CD8-positive, alpha-beta T cell (primary cell): ENCODE measurements at regions of chr16 and their contacts with region 1.

Region 1: DNA sequence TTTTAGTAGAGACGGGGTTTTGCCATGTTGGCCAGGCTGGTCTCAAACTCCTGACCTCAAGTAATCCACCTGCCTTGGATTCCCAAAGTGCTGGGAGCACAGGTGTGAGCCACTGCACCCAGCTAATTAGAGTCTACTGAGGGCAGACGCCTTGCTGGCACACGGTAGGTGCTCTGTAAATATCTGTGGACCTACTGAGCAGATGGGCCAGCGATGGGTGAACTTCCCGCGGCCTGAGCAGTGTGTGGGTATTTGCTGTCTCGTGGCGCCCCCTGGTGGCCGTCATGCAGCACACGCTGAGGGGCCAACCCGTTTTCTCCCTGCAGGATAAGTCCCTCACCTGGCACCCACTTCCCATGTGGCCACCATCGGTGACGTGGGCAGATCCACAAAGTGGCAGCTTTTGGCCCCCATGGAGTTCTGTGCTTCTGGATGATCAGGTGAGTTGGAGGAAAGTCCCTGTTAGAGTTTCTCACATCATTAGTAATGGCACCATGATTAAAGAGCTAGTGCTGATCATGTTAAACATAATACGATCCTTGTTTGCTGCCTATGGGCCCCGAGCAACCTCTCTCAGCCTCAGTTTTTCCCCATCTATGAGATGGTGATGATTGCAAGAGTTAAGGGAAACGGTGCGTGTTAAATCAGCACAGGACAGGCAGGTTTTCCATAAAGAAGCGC is 40.7 kb downstream of the ZDHHC7 start:
- DNase-seq: peak; percentile 59 to 87 (median 75)
- ATAC-seq: peak; percentile 87
- H3K4me3 ChIP-seq: no peak overlapping the region
- H3K4me3 Mint-ChIP-seq: no peak overlapping the region
- H3K27ac ChIP-seq: no peak overlapping the region
- H3K27ac Mint-ChIP-seq: no peak overlapping the region
- H3K4me1 ChIP-seq: peaks cover 3% of the 10 kb centered on the region
- H3K4me1 Mint-ChIP-seq: peaks cover 4% of the 10 kb centered on the region
- H3K27me3 ChIP-seq: no peaks in the 10 kb centered on the region
- H3K27me3 Mint-ChIP-seq: peaks cover 3% of the 10 kb centered on the region
- CTCF ChIP-seq: peak; percentile 93

Region 2: DNA sequence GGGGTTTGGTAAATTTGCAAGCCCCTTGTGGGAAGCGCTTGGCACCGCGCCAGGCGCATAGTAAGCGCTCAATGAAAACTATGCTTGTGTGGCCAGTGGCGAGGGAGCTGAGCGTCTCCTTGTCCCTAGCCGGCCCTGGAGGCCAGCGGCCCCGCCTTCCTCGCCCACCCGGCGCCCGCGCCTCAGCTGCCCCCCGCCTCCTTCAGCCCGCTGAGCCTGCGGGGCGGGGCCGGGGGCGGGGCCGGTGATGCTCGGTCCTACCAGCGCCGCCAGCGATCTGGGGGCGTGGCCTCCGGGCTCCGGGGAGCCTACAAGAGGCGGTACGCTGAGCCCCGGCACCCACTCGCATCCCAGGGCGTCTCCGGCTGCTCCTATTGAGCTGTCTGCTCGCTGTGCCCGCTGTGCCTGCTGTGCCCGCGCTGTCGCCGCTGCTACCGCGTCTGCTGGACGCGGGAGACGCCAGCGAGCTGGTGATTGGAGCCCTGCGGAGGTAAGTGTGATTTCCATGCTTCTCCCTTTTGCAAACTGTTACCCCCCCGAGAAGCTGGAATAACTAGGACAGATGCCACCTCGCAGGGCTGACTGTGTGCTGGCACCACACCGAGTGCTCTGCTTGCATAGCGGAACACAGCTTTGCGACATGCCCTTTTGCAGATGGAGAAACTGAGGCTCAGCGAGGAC is 150.8 kb before region 1 on chr16 and contains the start of gene CRISPLD2:
- CTCF ChIA-PET with region 1: no interaction called
- POLR2A ChIA-PET with region 1: no interaction called
- intact Hi-C with region 1: no loop called
- DNase-seq: peak; percentile 65 to 92 (median 85)
- ATAC-seq: peak; percentile 100
- H3K4me3 ChIP-seq: peak within 1 kb of the TSS; percentile 34 to 53
- H3K4me3 Mint-ChIP-seq: peak within 1 kb of the TSS; percentile 76
- H3K27ac ChIP-seq: no peak within 1 kb of the TSS
- H3K27ac Mint-ChIP-seq: no peak within 1 kb of the TSS
- H3K4me1 ChIP-seq: peaks cover 13% of the 10 kb centered on the region
- H3K4me1 Mint-ChIP-seq: peaks cover 9% of the 10 kb centered on the region
- H3K27me3 ChIP-seq: no peaks in the 10 kb centered on the region
- H3K27me3 Mint-ChIP-seq: peaks cover 28% of the 10 kb centered on the region
- CTCF ChIP-seq: no peak
- total RNA-seq, gene CRISPLD2: 1.00 to 1.7 TPM

Region 3: GRCh38 chr16:84925092-84925772 is 45.4 kb before region 1 on chr16:
- CTCF ChIA-PET with region 1: interaction called, 37 read pairs
- POLR2A ChIA-PET with region 1: no interaction called
- intact Hi-C with region 1: loop called (anchors 1 kb)
- DNase-seq: peak; percentile 37 to 81 (median 64)
- ATAC-seq: peak; percentile 65
- H3K4me3 ChIP-seq: no peak overlapping the region
- H3K4me3 Mint-ChIP-seq: no peak overlapping the region
- H3K27ac ChIP-seq: no peak overlapping the region
- H3K27ac Mint-ChIP-seq: no peak overlapping the region
- H3K4me1 ChIP-seq: peaks cover 1% of the 10 kb centered on the region
- H3K4me1 Mint-ChIP-seq: peaks cover 3% of the 10 kb centered on the region
- H3K27me3 ChIP-seq: no peaks in the 10 kb centered on the region
- H3K27me3 Mint-ChIP-seq: peaks cover 7% of the 10 kb centered on the region
- CTCF ChIP-seq: peak; percentile 72

Region 4: DNA sequence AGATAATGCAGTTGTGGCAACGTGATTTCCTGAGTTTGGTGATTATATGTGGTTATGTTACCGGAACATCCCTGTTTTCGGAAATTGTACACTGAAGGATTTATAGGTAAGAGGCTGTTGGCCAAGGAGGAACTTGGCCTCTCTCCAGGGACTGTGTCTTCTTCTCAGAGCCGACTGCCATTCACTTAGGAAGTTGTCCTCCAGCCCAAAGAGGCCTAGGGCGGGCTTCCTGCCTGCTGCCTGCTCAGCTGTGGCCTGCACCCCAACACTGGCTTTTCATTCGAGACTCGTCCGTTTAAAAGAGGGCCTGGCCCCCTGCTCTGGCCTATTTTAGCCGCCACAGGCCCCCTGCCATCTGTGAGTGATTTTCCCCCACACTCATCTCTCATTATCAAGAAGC is 23.6 kb before region 1 on chr16:
- CTCF ChIA-PET with region 1: interaction called, 66 read pairs
- POLR2A ChIA-PET with region 1: interaction called, 3 read pairs
- intact Hi-C with region 1: loop called in 1 of 2 experiments (anchors 1 kb)
- DNase-seq: no peak
- ATAC-seq: no peak
- H3K4me3 ChIP-seq: no peak overlapping the region
- H3K4me3 Mint-ChIP-seq: no peak overlapping the region
- H3K27ac ChIP-seq: no peak overlapping the region
- H3K27ac Mint-ChIP-seq: no peak overlapping the region
- H3K4me1 ChIP-seq: peaks cover 16% of the 10 kb centered on the region
- H3K4me1 Mint-ChIP-seq: peaks cover 6% of the 10 kb centered on the region
- H3K27me3 ChIP-seq: peaks cover 0 to 4% of the 10 kb centered on the region in 2 experiments
- H3K27me3 Mint-ChIP-seq: peaks cover 7% of the 10 kb centered on the region
- CTCF ChIP-seq: no peak

Region 5: DNA sequence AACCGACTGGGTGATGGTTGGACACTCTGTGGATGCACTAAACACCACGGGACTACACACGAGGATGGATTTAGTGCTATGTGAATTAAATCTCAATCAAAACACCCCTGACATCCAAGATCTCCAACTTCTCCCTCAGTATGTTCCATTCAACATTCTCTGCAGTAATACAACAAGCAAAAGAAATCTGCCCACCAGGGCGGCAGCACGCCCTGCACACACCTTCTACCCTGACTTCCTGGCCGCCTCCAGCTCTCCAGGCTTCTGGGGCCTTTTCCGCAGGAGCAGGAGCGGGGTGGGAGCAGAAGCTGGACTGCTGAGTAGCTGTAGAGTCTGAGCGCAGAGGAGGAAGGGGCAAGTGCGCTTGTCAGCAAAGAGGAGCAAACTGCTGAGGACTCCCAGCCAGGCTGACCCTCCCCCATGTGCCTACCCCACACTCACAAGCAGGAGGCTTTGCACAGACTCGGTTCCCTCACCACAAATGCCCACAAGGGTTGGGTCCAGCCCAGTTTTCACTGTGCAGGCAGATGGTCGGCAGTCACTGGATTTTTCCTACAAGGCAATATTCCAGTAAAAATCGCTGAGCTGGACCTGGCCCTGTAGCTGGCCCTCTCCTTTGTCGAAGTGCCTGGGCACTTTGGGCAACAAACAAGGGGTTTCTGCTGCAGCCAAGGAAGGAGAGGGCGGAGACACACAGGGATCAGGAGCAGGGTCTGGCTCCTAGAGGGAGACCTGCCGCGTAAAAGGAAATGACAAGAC is 17.9 kb after region 1 on chr16:
- CTCF ChIA-PET with region 1: interaction called, 11 read pairs
- POLR2A ChIA-PET with region 1: interaction called, 3 read pairs
- intact Hi-C with region 1: no loop called
- DNase-seq: no peak
- ATAC-seq: no peak
- H3K4me3 ChIP-seq: no peak overlapping the region
- H3K4me3 Mint-ChIP-seq: no peak overlapping the region
- H3K27ac ChIP-seq: no peak overlapping the region
- H3K27ac Mint-ChIP-seq: no peak overlapping the region
- H3K4me1 ChIP-seq: no peaks in the 10 kb centered on the region
- H3K4me1 Mint-ChIP-seq: peaks cover 6% of the 10 kb centered on the region
- H3K27me3 ChIP-seq: no peaks in the 10 kb centered on the region
- H3K27me3 Mint-ChIP-seq: no peaks in the 10 kb centered on the region
- CTCF ChIP-seq: no peak